Calu3 (cell line): ENCODE measurements at regions of chr10 and their contacts with region 1.

Region 1: DNA sequence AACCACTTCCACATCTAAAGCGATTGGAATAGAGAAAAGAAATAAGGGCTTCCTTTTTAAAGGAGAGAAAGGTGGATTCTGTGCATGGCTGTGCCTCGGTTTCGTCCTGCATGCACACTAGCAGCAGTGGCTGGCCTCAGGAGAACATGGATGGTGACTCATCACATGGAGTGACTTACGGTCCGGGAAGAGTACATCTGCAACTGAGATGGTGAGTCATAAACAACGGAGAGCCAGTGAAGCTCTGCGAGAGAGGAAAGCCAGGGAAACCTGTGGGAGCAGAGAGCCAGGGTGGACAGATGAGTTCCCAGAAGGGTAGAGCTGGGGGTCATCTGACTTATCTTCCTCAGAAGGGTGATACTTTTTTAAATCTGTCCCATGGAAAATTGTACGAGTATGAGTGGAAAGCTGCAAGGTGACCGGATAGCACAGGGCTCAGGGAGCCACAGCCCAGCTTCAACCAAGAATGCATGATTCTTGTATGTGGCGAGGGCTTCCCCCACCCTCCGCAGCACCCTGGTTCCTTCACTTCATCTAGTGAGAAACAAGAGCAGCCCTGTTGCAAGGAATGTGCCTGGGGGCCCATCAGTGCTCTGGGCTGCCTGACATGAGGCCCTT is 259.1 kb downstream of the KLF6 start:
- DNase-seq: peak; percentile 54
- H3K4me3 Mint-ChIP-seq: no peak overlapping the region
- H3K27ac Mint-ChIP-seq: peak overlapping the region; percentile 41
- H3K4me1 Mint-ChIP-seq: peaks cover 17% of the 10 kb centered on the region
- H3K27me3 Mint-ChIP-seq: no peaks in the 10 kb centered on the region
- CTCF ChIP-seq: no peak

Region 2: GRCh38 chr10:3389130-3389529 is 136.8 kb before region 1 on chr10:
- CTCF ChIA-PET with region 1: no interaction called
- intact Hi-C with region 1: no loop called
- DNase-seq: no peak
- H3K4me3 Mint-ChIP-seq: no peak overlapping the region
- H3K27ac Mint-ChIP-seq: no peak overlapping the region
- H3K4me1 Mint-ChIP-seq: peaks cover 9% of the 10 kb centered on the region
- H3K27me3 Mint-ChIP-seq: no peaks in the 10 kb centered on the region
- CTCF ChIP-seq: no peak

Region 3: DNA sequence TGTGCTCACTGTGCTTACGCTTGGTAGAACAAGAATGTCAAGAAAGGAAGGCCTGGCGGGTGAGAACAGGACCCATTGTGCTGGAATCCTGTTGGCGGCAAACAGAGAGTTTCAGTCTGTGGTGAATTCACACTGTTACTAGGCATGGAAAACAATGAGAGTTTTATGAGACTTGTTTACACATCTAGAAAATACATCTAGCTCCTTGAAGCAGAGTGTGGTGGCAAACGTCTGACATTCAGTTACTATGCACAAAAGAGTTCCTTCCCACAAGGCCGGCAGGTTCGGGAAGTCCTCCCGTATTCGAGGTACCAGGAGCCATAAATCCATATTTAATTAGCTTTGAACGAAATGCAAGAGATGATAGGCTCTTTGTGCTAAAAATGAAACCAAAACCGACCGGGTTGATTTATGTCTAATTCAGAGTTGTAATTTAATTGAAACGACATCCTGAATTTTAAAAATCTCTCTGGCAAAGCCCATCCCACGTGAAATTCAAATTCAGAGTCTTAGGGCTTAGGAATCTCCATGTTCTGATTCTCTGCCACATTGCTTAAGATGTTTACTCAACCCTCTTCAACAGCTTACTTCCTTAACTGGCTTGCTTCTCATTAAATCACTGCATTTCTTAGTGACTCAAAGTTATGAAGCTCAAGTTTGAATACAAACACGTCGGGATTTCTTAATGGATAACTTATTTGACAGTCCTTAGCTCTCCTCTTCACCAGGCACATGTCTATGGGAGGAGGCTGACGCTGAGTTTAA is 53.5 kb before region 1 on chr10:
- CTCF ChIA-PET with region 1: interaction called, 3 read pairs
- intact Hi-C with region 1: loop called (anchors 10 kb)
- DNase-seq: peak; percentile 60
- H3K4me3 Mint-ChIP-seq: peak overlapping the region; percentile 44
- H3K27ac Mint-ChIP-seq: peak overlapping the region; percentile 94
- H3K4me1 Mint-ChIP-seq: peaks cover 83% of the 10 kb centered on the region
- H3K27me3 Mint-ChIP-seq: no peaks in the 10 kb centered on the region
- CTCF ChIP-seq: no peak

Region 4: DNA sequence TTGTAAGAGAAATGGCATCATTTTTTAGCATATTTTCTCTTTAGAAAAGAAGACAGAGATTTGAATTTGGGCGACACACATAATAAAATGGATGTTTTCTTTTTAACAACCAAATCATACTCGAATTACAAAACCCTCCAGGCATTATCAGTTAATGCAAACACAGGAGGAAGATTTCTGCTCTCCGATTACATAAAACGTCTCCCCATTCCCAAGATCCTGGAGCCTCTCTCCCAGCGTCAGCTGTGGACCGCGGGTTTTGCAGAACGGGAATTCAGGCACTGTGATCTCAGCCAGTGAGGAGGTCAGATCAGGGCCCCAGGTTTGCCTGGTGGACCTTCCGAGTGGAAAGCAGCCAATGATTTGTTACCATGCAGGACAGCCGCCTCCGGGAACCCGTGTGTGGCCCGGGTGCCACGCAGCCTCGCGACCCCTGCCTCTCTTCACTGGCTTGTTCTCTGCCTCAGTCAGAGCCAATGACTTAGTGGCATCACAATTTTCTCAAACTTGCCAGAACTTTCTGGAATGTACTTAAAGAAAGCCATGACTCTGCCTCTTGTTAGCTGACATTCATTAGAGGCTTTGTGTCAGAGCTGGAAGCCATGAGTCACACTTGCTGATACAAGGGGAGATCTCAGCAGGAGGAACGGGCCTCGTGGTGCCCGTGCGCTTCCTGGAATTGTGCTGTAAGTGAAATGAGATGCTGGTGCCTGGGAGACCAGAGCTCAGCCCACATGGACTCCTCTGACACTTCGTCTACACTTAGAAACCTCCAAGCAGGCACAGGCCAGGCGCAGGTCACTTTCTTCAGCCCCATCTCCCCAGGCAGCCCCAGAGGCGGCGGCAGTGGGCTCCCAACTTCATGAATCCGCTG is 13.0 kb after region 1 on chr10:
- CTCF ChIA-PET with region 1: no interaction called
- intact Hi-C with region 1: no loop called
- DNase-seq: peak; percentile 5
- H3K4me3 Mint-ChIP-seq: no peak overlapping the region
- H3K27ac Mint-ChIP-seq: no peak overlapping the region
- H3K4me1 Mint-ChIP-seq: peaks cover 4% of the 10 kb centered on the region
- H3K27me3 Mint-ChIP-seq: no peaks in the 10 kb centered on the region
- CTCF ChIP-seq: no peak

Region 5: DNA sequence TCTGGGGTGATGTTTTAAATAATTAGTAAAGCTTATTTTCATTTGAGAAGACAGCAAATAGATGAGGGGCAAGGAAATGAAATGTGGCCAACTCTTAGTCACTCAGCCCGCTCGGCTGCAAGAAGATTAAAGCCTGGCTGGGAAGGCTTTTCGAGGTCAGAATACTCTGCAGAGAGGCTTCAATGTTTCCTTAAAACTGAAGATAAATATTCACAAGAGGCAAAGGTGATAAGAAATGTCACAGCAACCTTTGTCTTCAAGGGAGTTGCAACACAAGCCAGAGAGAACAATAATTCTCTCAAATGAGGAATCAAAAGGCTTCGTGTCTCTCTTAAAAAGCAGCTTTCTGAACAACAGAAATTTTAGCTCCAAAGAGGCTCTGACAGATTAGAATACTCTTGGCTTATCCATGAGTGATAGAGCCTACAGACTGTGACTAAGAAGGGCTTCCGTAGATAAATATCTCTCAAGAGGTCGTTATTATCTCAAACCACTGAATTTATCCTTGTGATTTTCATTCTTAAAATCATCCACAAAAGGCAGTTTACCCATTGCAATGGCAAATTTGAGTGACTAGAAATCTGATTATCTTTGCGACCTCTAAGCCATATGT is 166.6 kb after region 1 on chr10:
- CTCF ChIA-PET with region 1: no interaction called
- intact Hi-C with region 1: no loop called
- DNase-seq: no peak
- H3K4me3 Mint-ChIP-seq: no peak overlapping the region
- H3K27ac Mint-ChIP-seq: no peak overlapping the region
- H3K4me1 Mint-ChIP-seq: peaks cover 8% of the 10 kb centered on the region
- H3K27me3 Mint-ChIP-seq: no peaks in the 10 kb centered on the region
- CTCF ChIP-seq: no peak